Common myeloid progenitor, CD34-positive (primary cell): ENCODE measurements at regions of chr12 and their contacts with region 1.

Region 1: DNA sequence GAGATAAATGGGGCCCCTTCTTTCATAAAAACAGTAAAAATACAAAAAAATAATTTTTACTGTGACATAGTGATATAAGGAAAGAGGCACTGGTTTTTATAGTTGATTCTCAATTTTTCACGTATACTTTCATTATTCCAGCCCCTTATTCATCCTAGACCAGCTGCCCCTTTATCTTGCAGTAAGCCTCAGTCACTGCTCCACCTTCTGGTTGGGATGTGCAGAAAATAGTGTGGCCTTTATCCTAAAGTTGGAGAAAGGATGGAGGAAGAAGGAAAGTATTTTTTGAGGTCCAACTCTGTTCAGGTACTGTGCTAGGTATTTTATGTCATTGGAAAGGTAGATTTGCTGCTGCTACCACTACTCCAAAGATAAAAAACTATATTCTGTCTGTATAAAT is 172.7 kb downstream of the ANO6 start:
- DNase-seq: peak; percentile 44 to 67 (median 60)
- H3K4me3 ChIP-seq: no peak overlapping the region
- H3K27ac ChIP-seq: no peak overlapping the region
- H3K4me1 ChIP-seq: no peaks in the 10 kb centered on the region
- H3K27me3 ChIP-seq: no peaks in the 10 kb centered on the region

Region 2: DNA sequence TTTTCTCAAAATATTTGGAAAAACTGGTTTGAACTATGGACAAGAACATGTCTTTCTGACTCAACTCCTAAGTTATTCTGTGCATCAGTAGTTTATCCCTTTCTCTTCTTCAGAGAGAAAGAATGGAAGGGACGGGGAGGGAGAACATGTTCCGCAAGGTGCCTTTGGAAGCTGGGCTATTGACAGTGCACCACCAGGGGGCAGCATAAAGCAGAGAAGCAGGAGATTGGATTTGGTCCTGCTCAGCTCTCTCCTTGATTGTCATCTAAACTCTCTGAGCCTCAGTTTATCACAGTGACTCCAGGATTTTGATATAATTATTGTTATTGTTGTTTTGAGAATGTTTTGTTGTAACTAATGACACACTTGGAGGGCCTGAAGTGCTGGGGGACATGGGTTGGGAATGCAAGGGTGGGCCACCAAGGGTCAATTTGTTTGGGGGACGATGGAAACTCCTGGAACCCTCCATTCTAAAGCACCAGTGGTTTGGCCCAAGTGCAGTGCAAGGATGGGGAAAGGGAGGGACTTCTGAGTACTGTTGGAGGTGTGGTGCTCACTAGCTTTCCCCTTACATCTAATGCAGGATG is 218.0 kb before region 1 on chr12:
- CTCF ChIA-PET with region 1: interaction called, 12 read pairs
- POLR2A ChIA-PET with region 1: no interaction called
- DNase-seq: peak; percentile 69 to 86 (median 76)
- H3K4me3 ChIP-seq: no peak overlapping the region
- H3K27ac ChIP-seq: no peak overlapping the region
- H3K4me1 ChIP-seq: no peaks in the 10 kb centered on the region
- H3K27me3 ChIP-seq: no peaks in the 10 kb centered on the region

Region 3: DNA sequence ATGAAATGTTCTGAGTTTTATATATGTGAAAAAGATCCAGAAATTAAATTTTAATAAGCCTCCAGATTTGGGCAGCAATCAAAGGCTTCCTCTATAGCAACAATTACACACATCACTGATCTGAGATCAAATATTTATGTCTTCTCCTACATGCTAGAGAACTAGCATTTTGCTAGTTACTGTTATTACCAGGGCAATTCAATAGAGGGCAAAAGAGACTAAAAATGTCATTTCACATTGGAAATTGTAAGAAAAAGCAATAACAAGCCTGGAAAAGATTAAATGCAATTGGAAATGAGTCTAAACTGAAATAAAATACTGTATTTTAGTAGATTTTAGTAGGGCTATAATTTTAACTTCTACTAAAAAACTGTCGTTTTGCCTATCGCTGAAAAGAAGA is 205.3 kb before region 1 on chr12:
- CTCF ChIA-PET with region 1: interaction called, 16 read pairs
- POLR2A ChIA-PET with region 1: no interaction called
- DNase-seq: peak in 2 of 3 donors; percentile 9 to 29
- H3K4me3 ChIP-seq: no peak overlapping the region
- H3K27ac ChIP-seq: no peak overlapping the region
- H3K4me1 ChIP-seq: peaks cover 0 to 4% (median 0%) of the 10 kb centered on the region in 4 experiments
- H3K27me3 ChIP-seq: no peaks in the 10 kb centered on the region